ENCODE measurements at regions of chr3 and their contacts with region 1.

Region 1: DNA sequence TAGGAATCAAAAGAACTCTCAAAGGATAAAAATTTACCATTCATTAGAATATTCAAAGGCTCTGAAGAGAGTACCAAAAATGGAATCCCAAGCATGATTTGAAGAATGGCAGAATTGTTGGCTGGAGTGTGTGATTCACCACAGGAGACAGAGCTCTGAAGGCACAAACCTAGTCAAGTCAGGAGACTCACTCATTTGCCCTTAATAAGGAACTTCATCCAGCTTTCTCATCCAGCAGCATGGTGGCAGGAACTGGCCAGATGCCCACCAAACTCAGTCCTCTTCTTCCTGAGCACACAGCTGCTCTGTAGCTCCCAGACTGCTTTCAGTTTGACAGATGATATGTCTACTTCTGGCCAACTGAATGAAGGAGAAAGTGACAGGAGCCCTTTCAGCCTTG is 16.5 kb upstream of the HEG1 start:
- DNase-seq: no peak
- ATAC-seq: peak in 1 of 2 donors; percentile 31

Region 2: GRCh38 chr3:125129512-125129962 is 57.2 kb after region 1 on chr3:
- intact Hi-C with region 1: loop called in 1 of 2 experiments (anchors 10 kb)
- DNase-seq: peak; percentile 72
- ATAC-seq: peak; percentile 68 to 86

Measured in left cardiac atrium (tissue), 4 donors.